ENCODE measurements at regions of chr13 and their contacts with region 1.

Region 1: GRCh38 chr13:98910501-98910951 is 67.3 kb downstream of the DOCK9 start:
- DNase-seq: peak; percentile 72
- H3K4me3 Mint-ChIP-seq: peak overlapping the region; percentile 14
- H3K27ac Mint-ChIP-seq: peak overlapping the region; percentile 90
- H3K4me1 Mint-ChIP-seq: peaks cover 63% of the 10 kb centered on the region
- H3K27me3 Mint-ChIP-seq: no peaks in the 10 kb centered on the region

Region 2: DNA sequence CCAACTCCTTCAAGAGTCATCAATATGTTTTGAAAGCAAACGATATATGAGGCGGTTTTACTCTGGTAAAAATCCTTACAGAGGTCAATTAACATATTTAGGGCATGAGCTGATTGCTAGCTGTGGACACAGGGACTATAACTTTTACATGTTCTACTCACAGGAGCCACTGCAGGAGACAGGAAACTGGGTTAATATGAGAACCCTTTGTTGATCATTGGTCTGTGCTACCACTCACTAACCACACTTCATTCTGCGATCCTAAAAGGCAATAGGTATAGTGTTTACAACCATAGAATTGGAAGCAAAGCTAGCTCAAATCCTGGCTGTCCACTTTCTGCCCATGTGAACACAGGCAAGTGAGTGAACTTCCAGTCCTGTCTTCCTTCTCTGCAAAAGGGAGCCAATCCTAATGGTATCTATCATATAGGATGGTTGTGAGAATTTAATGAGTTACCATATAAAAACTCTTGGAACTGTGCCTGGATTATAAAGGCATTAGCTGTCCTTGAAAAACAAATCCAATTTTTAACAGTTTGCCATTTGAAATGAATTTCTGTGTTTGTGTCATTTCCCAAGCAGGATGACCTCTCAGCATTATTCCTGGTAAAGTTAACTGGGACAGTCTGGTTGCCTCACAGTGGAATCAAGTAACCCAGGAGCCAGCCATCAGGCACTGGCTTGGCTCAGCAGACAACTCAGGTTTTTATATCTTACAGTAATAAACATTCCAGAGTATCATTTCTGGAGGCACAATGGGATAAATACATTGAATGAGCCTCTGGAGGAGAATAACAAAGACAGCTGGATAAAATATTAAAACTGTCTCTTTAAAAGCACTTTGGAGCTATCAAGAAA is 1506.4 kb before region 1 on chr13:
- CTCF ChIA-PET with region 1: no interaction called
- intact Hi-C with region 1: no loop called
- DNase-seq: no peak
- H3K4me3 Mint-ChIP-seq: no peak overlapping the region
- H3K27ac Mint-ChIP-seq: no peak overlapping the region
- H3K4me1 Mint-ChIP-seq: no peaks in the 10 kb centered on the region
- H3K27me3 Mint-ChIP-seq: peaks cover 8% of the 10 kb centered on the region

Region 3: GRCh38 chr13:98570929-98571372 is 339.6 kb before region 1 on chr13:
- CTCF ChIA-PET with region 1: no interaction called
- intact Hi-C with region 1: loop called (anchors 5 kb)
- DNase-seq: peak; percentile 62
- H3K4me3 Mint-ChIP-seq: peak overlapping the region; percentile 76
- H3K27ac Mint-ChIP-seq: peak overlapping the region; percentile 80
- H3K4me1 Mint-ChIP-seq: peaks cover 86% of the 10 kb centered on the region
- H3K27me3 Mint-ChIP-seq: no peaks in the 10 kb centered on the region

Region 4: GRCh38 chr13:98975822-98976261 is 65.3 kb after region 1 on chr13:
- CTCF ChIA-PET with region 1: no interaction called
- intact Hi-C with region 1: loop called (anchors 2 kb)
- DNase-seq: no peak
- H3K4me3 Mint-ChIP-seq: peak overlapping the region; percentile 36
- H3K27ac Mint-ChIP-seq: peak overlapping the region; percentile 50
- H3K4me1 Mint-ChIP-seq: peaks cover 72% of the 10 kb centered on the region
- H3K27me3 Mint-ChIP-seq: no peaks in the 10 kb centered on the region

Region 5: GRCh38 chr13:99027260-99027659 is 116.7 kb after region 1 on chr13:
- CTCF ChIA-PET with region 1: interaction called, 11 read pairs
- intact Hi-C with region 1: loop called (anchors 2 kb)
- DNase-seq: peak; percentile 35
- H3K4me3 Mint-ChIP-seq: no peak overlapping the region
- H3K27ac Mint-ChIP-seq: peak overlapping the region; percentile 74
- H3K4me1 Mint-ChIP-seq: peaks cover 88% of the 10 kb centered on the region
- H3K27me3 Mint-ChIP-seq: no peaks in the 10 kb centered on the region

Region 6: GRCh38 chr13:99124794-99125316 is 214.3 kb after region 1 on chr13:
- CTCF ChIA-PET with region 1: no interaction called
- intact Hi-C with region 1: loop called (anchors 5 kb)
- DNase-seq: peak; percentile 23
- H3K4me3 Mint-ChIP-seq: peak overlapping the region; percentile 35
- H3K27ac Mint-ChIP-seq: no peak overlapping the region
- H3K4me1 Mint-ChIP-seq: peaks cover 42% of the 10 kb centered on the region
- H3K27me3 Mint-ChIP-seq: no peaks in the 10 kb centered on the region